Activated CD4-positive, alpha-beta memory T cell treated with anti-CD3 and anti-CD28 coated beads for 36 hours (primary cell): ENCODE measurements at regions of chr22 and their contacts with region 1.

Region 1: GRCh38 chr22:40276996-40277823 is 69.1 kb upstream of the ADSL start:
- DNase-seq: no peak
- H3K4me3 Mint-ChIP-seq: no peak overlapping the region
- H3K27ac Mint-ChIP-seq: peak overlapping the region; percentile 93
- H3K4me1 Mint-ChIP-seq: peaks cover 51% of the 10 kb centered on the region
- H3K27me3 Mint-ChIP-seq: no peaks in the 10 kb centered on the region

Region 2: GRCh38 chr22:40258451-40259046 is 18.7 kb before region 1 on chr22:
- CTCF ChIA-PET with region 1: no interaction called
- POLR2A ChIA-PET with region 1: interaction called, 3 read pairs
- intact Hi-C with region 1: loop called (anchors 2 kb)
- DNase-seq: peak; percentile 31
- H3K4me3 Mint-ChIP-seq: no peak overlapping the region
- H3K27ac Mint-ChIP-seq: peak overlapping the region; percentile 75
- H3K4me1 Mint-ChIP-seq: peaks cover 67% of the 10 kb centered on the region
- H3K27me3 Mint-ChIP-seq: no peaks in the 10 kb centered on the region